ENCODE measurements at regions of chr1 and their contacts with region 1.

Region 1: GRCh38 chr1:27603681-27604578 is at the start of gene AHDC1:
- DNase-seq: peak; percentile 94
- H3K4me3 ChIP-seq: peak within 1 kb of the TSS; percentile 78
- H3K27ac ChIP-seq: peak within 1 kb of the TSS; percentile 57
- H3K4me1 ChIP-seq: peaks cover 76% of the 10 kb centered on the region
- CTCF ChIP-seq: no peak
- total RNA-seq, gene AHDC1: 5.5 and 6.5 TPM in 2 replicates

Region 2: DNA sequence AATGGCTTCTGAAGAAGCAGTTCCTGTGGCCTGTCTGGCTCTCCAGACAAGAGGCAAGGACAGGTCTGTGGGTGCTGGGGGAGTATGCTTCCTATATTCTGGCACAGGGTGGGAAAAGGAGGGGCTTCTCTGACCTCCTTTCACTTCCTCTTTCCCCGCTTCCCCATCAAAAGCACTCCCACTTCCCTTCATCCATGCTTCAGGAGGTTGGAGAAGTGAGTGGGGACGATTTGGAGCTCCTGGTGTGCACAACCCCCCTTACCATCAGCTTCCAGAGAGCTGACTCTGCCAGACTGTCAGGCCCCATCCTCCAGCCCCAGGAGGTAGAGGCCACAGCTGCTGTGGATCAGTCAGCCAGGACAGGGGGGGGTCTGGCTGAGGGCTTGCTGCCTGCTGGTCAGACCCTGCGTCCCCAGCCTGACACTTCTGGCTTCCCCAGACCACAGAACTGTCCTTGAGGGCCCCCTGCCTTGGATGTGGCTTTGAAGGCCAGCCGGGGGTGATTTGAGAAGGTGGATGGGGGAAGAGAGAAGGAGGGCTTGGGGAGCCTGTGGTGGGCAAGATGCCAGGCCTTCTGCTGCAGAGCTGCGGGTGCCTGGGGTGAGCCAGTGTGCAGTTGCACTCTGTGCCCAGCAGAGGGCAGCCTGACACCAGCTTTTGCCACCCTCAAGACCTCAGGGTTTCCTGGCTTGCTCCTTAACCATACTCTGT is 303.4 kb before region 1 on chr1:
- CTCF ChIA-PET with region 1: interaction called, 3 read pairs
- POLR2A ChIA-PET with region 1: no interaction called
- intact Hi-C with region 1: loop called (anchors 1 kb)
- DNase-seq: peak; percentile 80
- H3K4me3 ChIP-seq: no peak overlapping the region
- H3K27ac ChIP-seq: no peak overlapping the region
- H3K4me1 ChIP-seq: peaks cover 9% of the 10 kb centered on the region
- CTCF ChIP-seq: peak; percentile 90

Region 3: GRCh38 chr1:27392096-27392777 is 211.7 kb before region 1 on chr1 and contains the start of gene GPR3:
- CTCF ChIA-PET with region 1: interaction called, 4 read pairs
- POLR2A ChIA-PET with region 1: no interaction called
- intact Hi-C with region 1: loop called (anchors 1 kb)
- DNase-seq: peak; percentile 96
- H3K4me3 ChIP-seq: peak within 1 kb of the TSS; percentile 75
- H3K27ac ChIP-seq: no peak within 1 kb of the TSS
- H3K4me1 ChIP-seq: peaks cover 13% of the 10 kb centered on the region
- CTCF ChIP-seq: peak; percentile 74
- total RNA-seq, gene GPR3: 0.21 and 0.32 TPM in 2 replicates

Region 4: GRCh38 chr1:27416387-27417111 is 187.4 kb before region 1 on chr1:
- CTCF ChIA-PET with region 1: interaction called, 7 read pairs
- POLR2A ChIA-PET with region 1: no interaction called
- intact Hi-C with region 1: loop called (anchors 5 kb)
- DNase-seq: peak; percentile 81
- H3K4me3 ChIP-seq: no peak overlapping the region
- H3K27ac ChIP-seq: peak overlapping the region; percentile 25
- H3K4me1 ChIP-seq: peaks cover 34% of the 10 kb centered on the region
- CTCF ChIP-seq: peak; percentile 95

Region 5: GRCh38 chr1:27519331-27520258 is 84.3 kb before region 1 on chr1:
- CTCF ChIA-PET with region 1: no interaction called
- POLR2A ChIA-PET with region 1: no interaction called
- intact Hi-C with region 1: no loop called
- DNase-seq: no peak
- H3K4me3 ChIP-seq: no peak overlapping the region
- H3K27ac ChIP-seq: no peak overlapping the region
- H3K4me1 ChIP-seq: peaks cover 21% of the 10 kb centered on the region
- CTCF ChIP-seq: no peak

Region 6: GRCh38 chr1:27662707-27663393 is 58.9 kb after region 1 on chr1:
- CTCF ChIA-PET with region 1: interaction called, 26 read pairs
- POLR2A ChIA-PET with region 1: interaction called, 34 read pairs
- intact Hi-C with region 1: loop called (anchors 1 kb)
- DNase-seq: peak; percentile 92
- H3K4me3 ChIP-seq: peak overlapping the region; percentile 54
- H3K27ac ChIP-seq: peak overlapping the region; percentile 85
- H3K4me1 ChIP-seq: peaks cover 54% of the 10 kb centered on the region
- CTCF ChIP-seq: peak; percentile 94

Measured in OCI-LY7 (cell line).